MCF 10A (cell line): ENCODE measurements at regions of chr1 and their contacts with region 1.

Region 1: GRCh38 chr1:189429610-189430009 is 1048.1 kb downstream of the BRINP3 start:
- DNase-seq: peak; percentile 68
- H3K4me3 Mint-ChIP-seq: no peak overlapping the region
- H3K27ac Mint-ChIP-seq: no peak overlapping the region
- H3K4me1 Mint-ChIP-seq: peaks cover 6% of the 10 kb centered on the region
- H3K27me3 Mint-ChIP-seq: no peaks in the 10 kb centered on the region
- CTCF ChIP-seq: peak; percentile 79

Region 2: GRCh38 chr1:189678779-189679178 is 249.2 kb after region 1 on chr1:
- CTCF ChIA-PET with region 1: interaction called, 3 read pairs
- POLR2A ChIA-PET with region 1: no interaction called
- intact Hi-C with region 1: loop called (anchors 10 kb)
- DNase-seq: no peak
- H3K4me3 Mint-ChIP-seq: no peak overlapping the region
- H3K27ac Mint-ChIP-seq: no peak overlapping the region
- H3K4me1 Mint-ChIP-seq: no peaks in the 10 kb centered on the region
- H3K27me3 Mint-ChIP-seq: no peaks in the 10 kb centered on the region
- CTCF ChIP-seq: no peak

Region 3: DNA sequence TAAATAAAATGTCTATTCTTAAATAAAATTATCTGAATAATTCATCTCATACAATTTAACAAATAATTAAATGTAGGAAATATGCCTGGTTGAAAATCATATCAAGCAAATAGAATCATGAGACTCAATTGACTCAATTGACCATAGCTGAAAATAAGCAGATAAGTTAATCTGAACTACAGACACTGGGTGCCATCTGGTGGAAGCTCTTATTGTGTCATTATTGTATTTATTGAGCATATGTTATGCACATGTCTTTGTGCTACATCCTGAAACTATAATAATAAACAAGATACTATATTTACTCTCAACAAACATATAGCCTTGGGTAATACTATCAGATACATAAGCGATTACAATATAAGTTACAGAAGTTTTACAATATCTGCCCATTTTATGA is 1007.0 kb after region 1 on chr1:
- CTCF ChIA-PET with region 1: no interaction called
- POLR2A ChIA-PET with region 1: no interaction called
- intact Hi-C with region 1: loop called (anchors 10 kb)
- DNase-seq: peak; percentile 72
- H3K4me3 Mint-ChIP-seq: no peak overlapping the region
- H3K27ac Mint-ChIP-seq: no peak overlapping the region
- H3K4me1 Mint-ChIP-seq: no peaks in the 10 kb centered on the region
- H3K27me3 Mint-ChIP-seq: no peaks in the 10 kb centered on the region
- CTCF ChIP-seq: peak; percentile 69